ENCODE measurements at regions of chr11 and their contacts with region 1.

Region 1: DNA sequence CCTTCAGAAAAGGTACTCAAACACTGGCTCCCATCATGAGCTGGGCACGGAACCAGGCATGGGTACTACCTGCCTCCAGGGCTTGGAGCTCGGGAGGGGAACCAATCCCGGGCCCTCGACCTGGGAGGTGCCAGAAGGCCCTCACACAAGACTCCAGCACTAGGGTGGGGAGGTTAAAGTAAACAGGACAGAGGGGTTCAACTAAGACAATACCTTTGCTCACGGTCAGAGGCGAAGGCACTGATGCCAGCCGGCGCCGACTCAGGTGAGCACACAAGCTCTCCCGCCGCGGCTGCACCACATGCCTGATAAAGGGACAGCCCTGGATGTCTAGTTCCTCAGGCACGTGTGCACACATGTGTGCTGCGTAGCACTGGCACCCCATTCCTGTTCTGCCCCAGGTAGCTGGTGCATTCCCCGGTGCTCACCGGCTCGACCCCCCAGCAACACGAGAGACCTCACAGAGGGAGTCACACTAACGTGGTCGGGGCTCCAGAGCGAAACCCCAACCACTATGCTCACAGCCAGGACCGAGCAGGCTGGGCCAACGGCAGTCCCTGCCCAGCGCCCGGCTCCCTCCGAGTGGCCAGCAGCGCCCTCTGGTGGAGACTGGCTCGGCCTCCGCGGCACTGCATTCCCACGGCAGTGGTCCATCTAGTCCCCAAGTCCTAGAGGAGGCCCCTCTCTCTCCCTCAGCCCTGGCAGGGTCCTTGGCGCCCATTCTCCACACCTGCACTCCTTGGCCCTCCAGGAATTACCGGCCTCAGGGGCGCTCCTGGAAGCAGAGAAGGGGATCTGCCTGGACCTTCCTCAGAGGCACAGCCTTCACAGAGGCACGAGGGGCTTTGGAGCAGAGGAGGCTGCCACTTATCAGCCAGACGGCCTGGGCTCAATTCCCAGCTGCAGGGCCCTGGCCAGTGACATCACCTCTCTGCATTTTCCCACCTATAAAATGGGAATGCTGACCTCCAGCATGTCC is 28.8 kb upstream of the MOB2 start:
- DNase-seq: peak; percentile 72
- H3K4me3 ChIP-seq: no peak overlapping the region
- H3K27ac ChIP-seq: peak overlapping the region in 1 of 2 donors; percentile 13
- H3K4me1 ChIP-seq: peaks cover 16% of the 10 kb centered on the region
- H3K27me3 ChIP-seq: no peaks in the 10 kb centered on the region
- CTCF ChIP-seq: peak; percentile 89 to 97 (median 96)
- POLR2A ChIP-seq: no peak

Region 2: GRCh38 chr11:1202776-1203504 is 312.4 kb before region 1 on chr11:
- intact Hi-C with region 1: loop called (anchors 2 kb)
- DNase-seq: peak; percentile 38
- H3K4me3 ChIP-seq: no peak overlapping the region
- H3K27ac ChIP-seq: no peak overlapping the region
- H3K4me1 ChIP-seq: peaks cover 10% of the 10 kb centered on the region
- H3K27me3 ChIP-seq: no peaks in the 10 kb centered on the region
- CTCF ChIP-seq: peak; percentile 70 to 91 (median 86)
- POLR2A ChIP-seq: no peak

Region 3: GRCh38 chr11:1309498-1310317 is 205.7 kb before region 1 on chr11 and contains the start of gene TOLLIP:
- intact Hi-C with region 1: loop called (anchors 5 kb)
- DNase-seq: peak; percentile 94
- H3K4me3 ChIP-seq: peak within 1 kb of the TSS; percentile 85 to 91
- H3K27ac ChIP-seq: peak within 1 kb of the TSS; percentile 91 to 94
- H3K4me1 ChIP-seq: peaks cover 16% of the 10 kb centered on the region
- H3K27me3 ChIP-seq: no peaks in the 10 kb centered on the region
- CTCF ChIP-seq: peak in 3 of 4 experiments; percentile 44 to 67 (median 58)
- POLR2A ChIP-seq: peak; percentile 82
- total RNA-seq, gene TOLLIP: 72.8 to 161 TPM

Region 4: DNA sequence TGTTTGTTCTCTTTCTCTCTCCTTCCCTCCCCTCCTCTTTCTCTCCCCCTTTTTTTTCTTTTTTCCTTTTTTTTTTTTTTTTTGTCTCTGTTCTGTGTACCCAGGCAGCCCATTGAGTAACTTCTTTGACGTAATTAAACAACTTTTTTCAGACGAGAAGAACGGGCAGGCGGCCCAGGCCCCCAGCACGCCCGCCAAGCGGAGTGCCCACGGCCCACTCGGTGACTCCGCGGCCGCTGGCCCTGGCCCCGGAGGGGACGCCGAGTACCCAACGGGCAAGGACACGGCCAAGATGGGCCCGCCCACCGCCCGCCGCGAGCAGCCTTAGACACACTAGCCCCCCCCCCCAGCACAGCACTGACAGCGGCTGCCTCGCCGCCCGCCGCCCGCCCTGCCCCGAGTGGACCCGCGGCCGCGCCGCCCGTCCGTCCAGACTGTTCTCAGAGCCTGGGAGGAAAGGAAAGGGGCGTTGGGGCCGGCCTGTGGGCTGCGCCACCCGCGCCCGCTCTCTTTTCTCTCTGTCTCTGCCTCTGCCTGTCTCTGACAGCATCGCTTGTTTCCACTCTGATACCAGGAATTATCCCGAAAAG is 54.9 kb before region 1 on chr11:
- intact Hi-C with region 1: loop called (anchors 1 kb)
- DNase-seq: peak; percentile 48
- H3K4me3 ChIP-seq: peak overlapping the region; percentile 3 to 18
- H3K27ac ChIP-seq: peak overlapping the region; percentile 80
- H3K4me1 ChIP-seq: peaks cover 7% of the 10 kb centered on the region
- H3K27me3 ChIP-seq: no peaks in the 10 kb centered on the region
- CTCF ChIP-seq: no peak
- POLR2A ChIP-seq: no peak

Region 5: GRCh38 chr11:1486114-1486825 is 29.1 kb before region 1 on chr11 and contains the start of gene MOB2:
- intact Hi-C with region 1: loop called (anchors 2 kb)
- DNase-seq: no peak
- H3K4me3 ChIP-seq: peak within 1 kb of the TSS; percentile 9 to 17
- H3K27ac ChIP-seq: peak within 1 kb of the TSS; percentile 27 to 41
- H3K4me1 ChIP-seq: peaks cover 10% of the 10 kb centered on the region
- H3K27me3 ChIP-seq: no peaks in the 10 kb centered on the region
- CTCF ChIP-seq: peak in 1 of 4 experiments; percentile 12
- POLR2A ChIP-seq: no peak
- total RNA-seq, gene MOB2: 39.3 to 46.5 TPM

Measured in prostate gland (tissue), 2 donors.